ENCODE measurements at regions of chr12 and their contacts with region 1.

Region 1: DNA sequence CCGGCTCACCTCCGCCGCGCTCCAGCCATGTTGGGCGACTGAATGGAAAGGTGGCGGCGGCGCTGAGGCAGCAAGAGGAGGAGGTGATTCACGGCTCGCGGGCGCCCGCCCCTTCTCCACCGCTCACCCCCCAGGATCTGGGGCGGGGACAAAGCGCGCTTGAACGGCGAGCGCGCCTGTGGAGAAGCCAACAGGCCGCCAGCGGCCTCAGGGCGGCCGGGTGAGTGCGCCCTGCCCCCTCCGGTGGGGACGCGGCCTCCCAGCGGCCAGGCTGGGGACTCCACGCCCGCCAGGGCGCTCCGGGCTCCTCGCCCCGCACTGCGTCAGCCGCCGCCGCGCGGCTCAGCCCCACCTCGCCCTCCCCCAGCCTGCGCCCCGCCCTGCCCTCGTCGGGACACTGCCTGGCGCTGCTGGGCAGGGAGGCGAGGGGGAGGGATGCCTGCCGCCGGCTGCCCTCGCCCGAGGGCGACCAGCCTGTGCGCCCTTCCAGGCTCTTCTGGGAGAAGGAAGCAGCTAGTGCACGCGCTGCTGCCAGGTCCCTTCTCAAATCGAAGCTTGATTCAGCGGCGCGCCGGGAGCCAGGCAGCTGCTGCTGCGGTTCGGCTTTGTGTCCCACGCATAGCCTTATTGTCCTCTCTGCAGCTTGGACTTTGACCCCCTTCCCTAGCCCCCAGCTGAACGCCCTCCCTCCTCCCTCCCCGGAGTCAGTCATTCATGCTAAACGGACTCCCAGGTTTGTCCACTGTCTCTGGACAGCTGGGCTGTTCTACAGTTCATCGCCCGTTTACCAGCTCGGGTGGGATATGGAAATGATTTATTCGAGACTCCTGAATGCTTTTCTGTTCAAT is at the start of gene KIF21A:
- DNase-seq: peak; percentile 84
- H3K4me3 Mint-ChIP-seq: peak within 1 kb of the TSS; percentile 89
- H3K27ac Mint-ChIP-seq: peak within 1 kb of the TSS; percentile 91
- H3K4me1 Mint-ChIP-seq: peaks cover 24% of the 10 kb centered on the region
- H3K27me3 Mint-ChIP-seq: peaks cover 2% of the 10 kb centered on the region
- total RNA-seq, gene KIF21A: 23.3 and 25.2 TPM in 2 replicates

Region 2: GRCh38 chr12:38906482-38907170 is 536.7 kb before region 1 on chr12:
- intact Hi-C with region 1: loop called (anchors 2 kb)
- DNase-seq: peak; percentile 64
- H3K4me3 Mint-ChIP-seq: peak overlapping the region; percentile 88
- H3K27ac Mint-ChIP-seq: peak overlapping the region; percentile 84
- H3K4me1 Mint-ChIP-seq: peaks cover 32% of the 10 kb centered on the region
- H3K27me3 Mint-ChIP-seq: peaks cover 18% of the 10 kb centered on the region

Region 3: DNA sequence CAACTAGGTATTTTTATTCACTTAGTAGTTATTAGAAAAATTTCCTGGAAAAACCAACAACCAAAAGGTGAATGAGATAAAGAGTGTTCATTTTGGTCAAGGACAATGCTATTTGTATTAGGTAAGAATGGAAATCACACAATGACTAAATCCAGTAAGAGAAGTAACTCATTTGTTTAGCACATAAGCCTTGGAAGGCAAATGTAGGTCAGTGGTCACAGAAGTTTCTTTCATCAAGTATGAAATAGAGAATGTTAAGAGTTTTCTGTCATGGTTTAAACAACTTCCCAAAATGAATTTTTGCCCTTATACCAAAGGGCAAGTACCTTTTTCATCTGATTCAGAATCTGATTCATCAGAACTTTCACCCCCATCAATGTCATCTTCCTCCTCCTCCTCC is 102.1 kb before region 1 on chr12:
- intact Hi-C with region 1: loop called (anchors 10 kb)
- DNase-seq: no peak
- H3K4me3 Mint-ChIP-seq: no peak overlapping the region
- H3K27ac Mint-ChIP-seq: no peak overlapping the region
- H3K4me1 Mint-ChIP-seq: peaks cover 11% of the 10 kb centered on the region
- H3K27me3 Mint-ChIP-seq: no peaks in the 10 kb centered on the region

Region 4: DNA sequence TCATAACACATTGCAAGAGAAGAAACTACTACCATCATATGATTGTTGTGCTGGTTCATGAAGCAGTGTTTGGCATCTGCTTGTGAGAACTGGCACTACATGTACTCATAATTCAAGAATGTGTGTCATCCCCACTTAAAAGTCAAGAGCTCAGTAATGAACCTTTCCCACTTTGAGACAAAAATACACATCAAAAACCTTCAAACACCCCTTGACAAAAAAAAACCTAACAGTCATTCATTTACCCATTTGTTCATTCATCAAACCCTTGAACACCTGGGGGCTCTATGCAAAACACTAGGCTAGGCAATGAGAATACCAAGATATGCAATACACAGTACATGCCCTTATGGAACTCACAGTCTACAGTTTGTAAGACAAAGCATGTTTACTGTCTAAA is 40.4 kb before region 1 on chr12:
- intact Hi-C with region 1: loop called (anchors 2 kb)
- DNase-seq: no peak
- H3K4me3 Mint-ChIP-seq: no peak overlapping the region
- H3K27ac Mint-ChIP-seq: no peak overlapping the region
- H3K4me1 Mint-ChIP-seq: peaks cover 21% of the 10 kb centered on the region
- H3K27me3 Mint-ChIP-seq: no peaks in the 10 kb centered on the region

Region 5: DNA sequence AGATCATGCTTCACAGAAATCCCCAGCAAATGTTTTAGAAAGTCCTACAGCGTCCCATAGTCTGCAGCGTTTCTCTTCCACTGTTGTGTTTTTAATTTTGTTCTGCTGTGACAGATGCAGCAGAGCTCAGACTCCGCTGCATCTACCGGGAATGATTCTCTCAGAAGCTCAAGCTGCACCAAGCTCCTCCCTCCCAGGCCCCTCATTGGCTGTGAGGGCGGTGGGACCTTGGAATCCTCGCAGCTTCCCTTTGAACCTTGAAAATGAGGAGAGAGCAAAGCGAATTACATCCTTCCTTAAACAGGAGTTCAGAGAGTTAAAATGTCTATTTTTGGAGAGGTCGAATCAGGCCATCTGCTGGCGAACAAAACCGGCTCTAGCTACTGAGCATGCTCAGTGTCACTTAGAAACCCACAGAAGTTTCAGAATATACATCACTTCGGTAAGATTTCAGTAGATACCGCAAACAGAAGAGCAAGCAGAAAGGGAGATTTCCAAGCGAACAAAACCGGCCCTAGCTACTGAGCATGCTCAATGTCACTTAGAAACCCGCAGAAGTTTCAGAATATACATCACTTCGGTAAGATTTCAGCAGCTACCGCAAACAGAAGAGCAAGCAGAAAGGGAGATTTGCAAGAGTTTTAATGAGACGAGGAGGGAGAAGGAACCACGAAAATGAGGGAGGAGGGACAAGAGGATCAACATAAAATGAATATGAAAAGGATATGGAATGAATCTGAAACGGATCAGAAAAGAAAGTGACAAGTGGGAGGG is 176.5 kb after region 1 on chr12 and contains the start of gene ABCD2:
- intact Hi-C with region 1: loop called (anchors 1 kb)
- DNase-seq: peak; percentile 78
- H3K4me3 Mint-ChIP-seq: no peak within 1 kb of the TSS
- H3K27ac Mint-ChIP-seq: no peak within 1 kb of the TSS
- H3K4me1 Mint-ChIP-seq: peaks cover 38% of the 10 kb centered on the region
- H3K27me3 Mint-ChIP-seq: no peaks in the 10 kb centered on the region
- total RNA-seq, gene ABCD2: 7.8 and 8.0 TPM in 2 replicates

Region 6: GRCh38 chr12:39682689-39683477 is 239.6 kb after region 1 on chr12:
- intact Hi-C with region 1: loop called (anchors 2 kb)
- DNase-seq: no peak
- H3K4me3 Mint-ChIP-seq: peak overlapping the region; percentile 72
- H3K27ac Mint-ChIP-seq: peak overlapping the region; percentile 64
- H3K4me1 Mint-ChIP-seq: peaks cover 52% of the 10 kb centered on the region
- H3K27me3 Mint-ChIP-seq: no peaks in the 10 kb centered on the region

Region 7: DNA sequence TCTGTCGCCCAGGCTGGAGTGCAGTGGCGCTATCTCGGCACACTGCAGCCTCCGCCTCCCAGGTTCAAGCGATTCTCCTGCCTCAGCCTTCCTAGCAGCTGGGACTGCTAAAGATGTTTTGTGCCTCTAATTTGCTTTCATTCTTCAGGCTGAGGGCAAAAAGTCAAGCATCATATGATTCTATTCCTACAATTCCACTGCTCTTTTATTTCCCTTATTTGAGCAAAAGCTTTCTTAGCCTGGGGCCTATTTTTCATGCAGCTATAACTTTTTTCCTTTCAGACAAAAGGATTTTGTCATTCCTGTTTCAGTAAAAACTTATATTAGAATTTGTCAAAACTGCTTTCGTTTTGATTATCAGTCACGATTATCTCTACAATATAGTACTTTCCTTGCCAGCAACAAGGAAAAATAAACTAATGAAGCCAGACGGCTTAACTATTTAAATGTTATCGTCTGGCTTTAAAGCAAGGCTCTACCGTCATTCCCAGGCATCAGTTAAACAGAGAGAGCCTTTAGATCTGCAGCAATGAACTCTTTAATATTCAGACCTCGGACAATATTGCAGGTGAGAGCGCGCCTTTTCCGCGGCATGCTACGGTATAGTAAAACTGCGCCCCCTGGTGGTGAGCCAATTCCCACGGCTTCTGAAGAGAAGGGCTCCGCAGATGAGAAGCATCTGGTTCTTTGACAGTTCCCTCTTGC is 663.9 kb after region 1 on chr12:
- intact Hi-C with region 1: loop called (anchors 2 kb)
- DNase-seq: peak; percentile 69
- H3K4me3 Mint-ChIP-seq: peak overlapping the region; percentile 80
- H3K27ac Mint-ChIP-seq: peak overlapping the region; percentile 26
- H3K4me1 Mint-ChIP-seq: peaks cover 30% of the 10 kb centered on the region
- H3K27me3 Mint-ChIP-seq: peaks cover 47% of the 10 kb centered on the region